Activated CD8-positive, alpha-beta memory T cell treated with anti-CD3 and anti-CD28 coated beads, Interleukin-2, amount 10 ng/mL, durations not matched to agents 7 days and 5 days (primary cell): ENCODE measurements at regions of chr1 and their contacts with region 1.

Region 1: GRCh38 chr1:30801771-30802198 is 44.2 kb upstream of the LAPTM5 start:
- DNase-seq: peak; percentile 83
- ATAC-seq: peak; percentile 70
- H3K4me3 Mint-ChIP-seq: no peak overlapping the region
- H3K27ac Mint-ChIP-seq: no peak overlapping the region
- H3K4me1 Mint-ChIP-seq: peaks cover 5% of the 10 kb centered on the region
- H3K27me3 Mint-ChIP-seq: peaks cover 40% of the 10 kb centered on the region

Region 2: DNA sequence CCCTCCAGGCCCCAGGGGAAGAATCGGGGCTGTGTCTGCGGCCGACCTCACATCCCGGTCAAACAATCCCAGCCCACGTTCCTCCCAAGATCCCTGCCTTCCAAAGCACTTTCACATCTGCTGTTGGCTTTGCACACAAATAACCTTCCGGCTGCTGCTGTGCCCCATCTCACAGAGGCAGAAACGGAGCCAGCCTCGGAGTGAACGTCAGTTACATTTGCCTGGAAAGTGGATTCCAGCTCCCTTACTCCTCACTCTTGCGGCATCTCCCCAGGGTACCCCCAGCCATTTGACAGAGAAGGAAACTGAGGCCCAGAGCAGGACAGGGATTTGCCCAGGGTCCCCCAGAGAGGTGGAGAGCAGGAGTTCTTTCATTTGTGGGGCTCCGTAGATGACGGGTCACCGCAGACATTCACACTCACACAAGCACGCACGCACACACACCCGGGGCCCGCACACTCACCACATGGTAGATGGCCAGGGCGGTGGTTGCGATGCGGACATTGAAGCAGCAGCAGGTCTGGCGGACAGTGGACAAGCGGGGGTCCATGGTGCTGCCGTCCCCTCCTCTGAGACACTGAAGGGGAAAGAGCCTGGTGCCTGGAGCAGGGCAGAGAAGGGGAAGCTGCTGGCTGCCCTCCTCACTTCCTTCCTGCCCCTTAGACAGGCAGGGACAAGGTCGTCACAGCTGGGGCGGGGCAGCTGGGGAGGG is 44.4 kb before region 1 on chr1 and contains the start of gene LAPTM5:
- CTCF ChIA-PET with region 1: no interaction called
- DNase-seq: peak; percentile 78
- ATAC-seq: peak; percentile 50
- H3K4me3 Mint-ChIP-seq: peak within 1 kb of the TSS; percentile 98
- H3K27ac Mint-ChIP-seq: peak within 1 kb of the TSS; percentile 95
- H3K4me1 Mint-ChIP-seq: peaks cover 81% of the 10 kb centered on the region
- H3K27me3 Mint-ChIP-seq: no peaks in the 10 kb centered on the region
- total RNA-seq, gene LAPTM5: 326 to 386 TPM

Region 3: DNA sequence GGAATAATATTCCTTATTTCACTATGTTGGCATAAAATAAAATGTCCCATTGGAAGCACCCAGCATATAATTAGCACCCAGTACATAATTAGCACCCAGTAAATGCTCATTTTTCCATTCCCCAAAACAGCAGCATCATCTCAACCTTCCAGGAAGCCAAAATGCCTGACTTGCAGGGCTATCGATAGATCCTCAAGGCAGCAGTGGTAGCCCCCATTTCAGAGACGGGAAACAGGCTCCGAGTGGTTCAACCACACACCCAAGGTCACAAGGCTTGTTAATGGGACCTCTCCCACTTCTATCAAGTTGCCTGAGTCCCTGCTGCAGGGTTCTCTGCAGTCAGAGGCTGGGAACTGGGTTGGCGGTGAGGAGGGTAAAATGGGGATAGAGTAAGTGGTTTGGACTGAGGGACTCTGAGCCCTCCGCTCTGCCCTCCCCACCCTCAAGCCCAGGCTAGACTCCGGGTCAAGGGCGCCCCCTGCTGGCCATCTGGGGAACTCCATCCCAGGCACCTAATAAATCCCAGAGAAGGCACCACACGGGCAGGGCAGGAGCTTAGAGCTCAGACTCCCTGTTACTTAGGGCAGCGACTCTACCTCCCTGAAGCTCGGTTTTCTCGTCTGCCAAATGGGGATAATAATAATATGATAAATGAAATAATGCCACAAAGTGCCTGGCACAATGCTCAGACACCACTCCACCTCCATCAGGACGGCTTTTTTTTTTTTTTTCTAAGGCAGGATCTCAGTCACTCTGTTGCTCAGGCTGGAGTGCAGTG is 22.3 kb before region 1 on chr1:
- CTCF ChIA-PET with region 1: interaction called, 38 read pairs
- DNase-seq: peak; percentile 93
- ATAC-seq: peak; percentile 77
- H3K4me3 Mint-ChIP-seq: no peak overlapping the region
- H3K27ac Mint-ChIP-seq: no peak overlapping the region
- H3K4me1 Mint-ChIP-seq: peaks cover 13% of the 10 kb centered on the region
- H3K27me3 Mint-ChIP-seq: peaks cover 7% of the 10 kb centered on the region

Region 4: GRCh38 chr1:30823969-30824735 is 22.4 kb after region 1 on chr1:
- CTCF ChIA-PET with region 1: interaction called, 12 read pairs
- DNase-seq: peak; percentile 70
- ATAC-seq: peak; percentile 82
- H3K4me3 Mint-ChIP-seq: peak overlapping the region; percentile 48
- H3K27ac Mint-ChIP-seq: no peak overlapping the region
- H3K4me1 Mint-ChIP-seq: peaks cover 16% of the 10 kb centered on the region
- H3K27me3 Mint-ChIP-seq: peaks cover 87% of the 10 kb centered on the region

Region 5: GRCh38 chr1:30911046-30911954 is 109.5 kb after region 1 on chr1:
- CTCF ChIA-PET with region 1: interaction called, 120 read pairs
- DNase-seq: peak; percentile 68
- ATAC-seq: peak; percentile 42
- H3K4me3 Mint-ChIP-seq: no peak overlapping the region
- H3K27ac Mint-ChIP-seq: no peak overlapping the region
- H3K4me1 Mint-ChIP-seq: peaks cover 14% of the 10 kb centered on the region
- H3K27me3 Mint-ChIP-seq: peaks cover 36% of the 10 kb centered on the region

Region 6: GRCh38 chr1:30929135-30929889 is 127.5 kb after region 1 on chr1:
- CTCF ChIA-PET with region 1: interaction called, 53 read pairs
- DNase-seq: peak; percentile 65
- ATAC-seq: peak; percentile 76
- H3K4me3 Mint-ChIP-seq: no peak overlapping the region
- H3K27ac Mint-ChIP-seq: peak overlapping the region; percentile 8
- H3K4me1 Mint-ChIP-seq: peaks cover 8% of the 10 kb centered on the region
- H3K27me3 Mint-ChIP-seq: no peaks in the 10 kb centered on the region